ENCODE measurements at regions of chr10 and their contacts with region 1.

Region 1: GRCh38 chr10:48523820-48524758 is 80.8 kb downstream of the ARHGAP22 start:
- DNase-seq: no peak
- H3K4me3 ChIP-seq: peak overlapping the region; percentile 57
- CTCF ChIP-seq: peak; percentile 48

Region 2: GRCh38 chr10:48363617-48364355 is 160.3 kb before region 1 on chr10:
- CTCF ChIA-PET with region 1: interaction called, 46 read pairs
- POLR2A ChIA-PET with region 1: no interaction called
- DNase-seq: no peak
- H3K4me3 ChIP-seq: no peak overlapping the region
- CTCF ChIP-seq: peak; percentile 55

Region 3: DNA sequence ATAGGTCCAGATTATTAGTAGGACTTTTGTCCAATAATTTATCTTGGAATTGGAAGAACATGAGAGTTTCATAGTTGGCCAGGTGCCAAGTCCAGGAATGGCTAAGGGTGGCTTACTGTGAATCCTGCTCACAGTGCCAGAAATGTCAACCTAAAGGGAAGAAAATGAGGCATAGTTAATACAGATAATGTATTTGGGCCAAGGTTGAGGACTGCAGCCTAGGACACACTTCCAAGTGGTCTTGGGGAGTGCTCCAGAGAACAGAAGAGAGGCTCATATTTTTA is 139.4 kb before region 1 on chr10:
- CTCF ChIA-PET with region 1: interaction called, 12 read pairs
- POLR2A ChIA-PET with region 1: no interaction called
- DNase-seq: no peak
- H3K4me3 ChIP-seq: no peak overlapping the region
- CTCF ChIP-seq: no peak

Region 4: DNA sequence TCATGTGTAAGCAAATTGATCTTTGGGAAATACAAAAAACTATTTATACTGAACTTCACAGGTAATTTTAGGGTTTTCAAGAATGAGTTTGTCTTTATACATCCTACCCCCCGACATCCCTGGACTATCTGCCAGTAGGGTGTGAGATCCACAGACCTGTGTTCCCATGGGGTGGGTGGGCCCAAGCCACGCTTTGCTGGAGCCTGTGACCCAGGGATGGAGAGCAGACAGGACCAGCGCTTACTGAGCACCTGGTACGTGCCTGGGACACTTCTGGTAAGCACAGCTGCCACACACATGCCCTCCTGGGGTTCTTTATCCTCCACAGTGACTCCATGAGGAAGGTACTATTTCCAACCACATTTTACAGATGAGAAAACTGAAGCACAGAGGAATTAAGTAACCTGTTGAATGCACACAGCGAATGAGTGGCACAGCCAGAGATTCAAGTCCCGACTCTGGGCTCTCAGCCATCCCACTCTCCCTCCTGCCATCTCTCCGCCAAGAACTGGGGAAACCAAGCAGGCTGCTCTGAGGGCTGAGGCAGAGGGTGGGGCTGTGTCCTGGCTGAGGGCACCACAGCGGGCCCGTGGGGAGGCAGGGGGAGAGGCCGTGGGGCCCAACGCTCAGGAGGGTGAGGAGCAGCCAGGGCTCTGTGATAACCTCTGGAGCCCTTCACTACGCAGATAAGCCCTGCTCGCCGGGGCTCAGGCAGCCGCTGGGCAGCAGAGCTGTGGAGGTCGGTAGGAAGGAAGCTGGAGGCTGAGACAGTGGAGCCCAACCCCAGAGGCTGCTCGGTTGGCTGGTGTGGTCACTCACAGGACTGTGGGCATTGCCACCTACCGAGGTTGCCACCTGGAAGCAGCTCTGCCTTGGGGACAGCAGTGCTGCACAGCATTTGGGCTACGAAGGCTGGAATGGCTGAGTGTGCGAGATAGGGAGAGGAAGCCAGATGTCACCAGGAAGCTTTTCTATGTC is 43.4 kb before region 1 on chr10:
- CTCF ChIA-PET with region 1: no interaction called
- POLR2A ChIA-PET with region 1: no interaction called
- DNase-seq: no peak
- H3K4me3 ChIP-seq: no peak overlapping the region
- CTCF ChIP-seq: no peak

Region 5: GRCh38 chr10:48506147-48506917 is 17.8 kb before region 1 on chr10:
- CTCF ChIA-PET with region 1: interaction called, 19 read pairs
- POLR2A ChIA-PET with region 1: no interaction called
- DNase-seq: no peak
- H3K4me3 ChIP-seq: no peak overlapping the region
- CTCF ChIP-seq: peak; percentile 45

Region 6: DNA sequence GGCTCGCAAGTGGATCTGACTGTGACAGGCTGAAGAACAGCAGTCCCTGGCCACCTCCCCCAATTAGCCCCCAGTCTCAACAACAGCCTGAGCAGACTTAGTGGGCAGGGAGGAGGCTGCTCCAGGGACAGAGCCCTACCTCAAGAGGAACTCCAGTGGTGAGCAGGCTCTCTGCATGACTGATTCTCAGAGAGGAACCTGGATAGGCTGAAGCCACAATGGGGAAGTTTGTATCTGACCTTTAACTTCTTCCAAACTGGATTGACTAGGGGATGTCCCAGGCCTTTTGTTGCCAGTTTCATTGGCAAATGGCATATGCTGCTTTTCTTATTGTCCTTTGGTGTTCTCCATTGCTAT is 12.2 kb before region 1 on chr10:
- CTCF ChIA-PET with region 1: interaction called, 19 read pairs
- POLR2A ChIA-PET with region 1: no interaction called
- DNase-seq: no peak
- H3K4me3 ChIP-seq: no peak overlapping the region
- CTCF ChIP-seq: no peak

Region 7: GRCh38 chr10:48533951-48534720 is 10.0 kb after region 1 on chr10:
- CTCF ChIA-PET with region 1: interaction called, 12 read pairs
- POLR2A ChIA-PET with region 1: interaction called, 3 read pairs
- DNase-seq: no peak
- H3K4me3 ChIP-seq: no peak overlapping the region
- CTCF ChIP-seq: no peak

Region 8: DNA sequence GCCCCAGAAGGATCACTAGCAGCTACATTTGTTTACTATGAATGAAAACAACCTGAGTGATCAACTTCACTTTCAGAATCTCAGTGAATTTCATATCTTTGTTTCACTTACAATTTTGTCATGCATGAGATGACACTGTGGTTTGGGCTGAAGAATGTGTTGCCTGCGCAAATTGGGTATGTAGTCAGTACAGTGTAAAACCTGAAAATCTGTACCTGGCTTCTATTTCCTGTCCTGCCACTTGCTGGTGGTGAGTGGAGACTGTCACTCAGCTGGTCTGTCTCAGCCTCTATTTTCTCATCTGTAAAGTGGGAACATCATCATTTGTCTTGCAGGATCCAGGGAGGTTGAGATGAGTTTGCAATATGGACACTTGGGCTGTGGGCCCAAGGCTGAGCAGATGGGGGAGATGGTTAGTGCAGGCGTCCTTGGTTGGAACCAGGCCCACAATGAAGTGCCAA is 278.6 kb after region 1 on chr10:
- CTCF ChIA-PET with region 1: no interaction called
- POLR2A ChIA-PET with region 1: no interaction called
- DNase-seq: no peak
- H3K4me3 ChIP-seq: no peak overlapping the region
- CTCF ChIP-seq: no peak

Region 9: GRCh38 chr10:49144058-49144720 is 620.1 kb after region 1 on chr10:
- CTCF ChIA-PET with region 1: no interaction called
- POLR2A ChIA-PET with region 1: no interaction called
- DNase-seq: no peak
- H3K4me3 ChIP-seq: no peak overlapping the region
- CTCF ChIP-seq: no peak